CD14-positive monocyte (primary cell): ENCODE measurements at regions of chr18 and their contacts with region 1.

Region 1: GRCh38 chr18:57677262-57678211 is 55.9 kb upstream of the NARS1 start:
- DNase-seq: no peak
- H3K4me3 ChIP-seq: no peak overlapping the region
- H3K4me3 Mint-ChIP-seq: no peak overlapping the region
- H3K27ac ChIP-seq: no peak overlapping the region
- H3K27ac Mint-ChIP-seq: no peak overlapping the region
- H3K4me1 ChIP-seq: no peaks in the 10 kb centered on the region
- H3K4me1 Mint-ChIP-seq: no peaks in the 10 kb centered on the region
- H3K27me3 ChIP-seq: no peaks in the 10 kb centered on the region
- H3K27me3 Mint-ChIP-seq: peaks cover 0 to 1% (median 0%) of the 10 kb centered on the region in 3 donors
- CTCF ChIP-seq: no peak

Region 2: DNA sequence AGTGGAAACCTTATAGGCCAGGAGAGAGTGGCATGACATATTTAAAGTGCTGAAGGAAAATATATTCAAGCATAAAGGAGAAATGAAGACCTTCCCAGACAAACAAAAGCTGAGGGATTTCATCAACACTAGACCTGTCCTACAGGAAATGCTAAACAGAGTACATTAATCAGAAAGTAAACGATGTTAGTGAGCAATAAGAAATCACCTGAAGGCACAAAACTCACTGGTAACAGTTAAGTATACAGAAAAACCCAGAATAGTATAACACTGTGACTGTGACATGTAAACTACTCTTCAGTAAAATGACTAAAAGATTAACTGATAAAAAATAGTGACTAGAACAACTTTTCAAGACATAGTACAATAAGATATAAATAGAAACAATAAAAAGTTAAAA is 38.1 kb after region 1 on chr18:
- intact Hi-C with region 1: no loop called
- DNase-seq: no peak
- H3K4me3 ChIP-seq: no peak overlapping the region
- H3K4me3 Mint-ChIP-seq: no peak overlapping the region
- H3K27ac ChIP-seq: no peak overlapping the region
- H3K27ac Mint-ChIP-seq: no peak overlapping the region
- H3K4me1 ChIP-seq: no peaks in the 10 kb centered on the region
- H3K4me1 Mint-ChIP-seq: no peaks in the 10 kb centered on the region
- H3K27me3 ChIP-seq: no peaks in the 10 kb centered on the region
- H3K27me3 Mint-ChIP-seq: peaks cover 0 to 2% (median 1%) of the 10 kb centered on the region in 3 donors
- CTCF ChIP-seq: no peak

Region 3: DNA sequence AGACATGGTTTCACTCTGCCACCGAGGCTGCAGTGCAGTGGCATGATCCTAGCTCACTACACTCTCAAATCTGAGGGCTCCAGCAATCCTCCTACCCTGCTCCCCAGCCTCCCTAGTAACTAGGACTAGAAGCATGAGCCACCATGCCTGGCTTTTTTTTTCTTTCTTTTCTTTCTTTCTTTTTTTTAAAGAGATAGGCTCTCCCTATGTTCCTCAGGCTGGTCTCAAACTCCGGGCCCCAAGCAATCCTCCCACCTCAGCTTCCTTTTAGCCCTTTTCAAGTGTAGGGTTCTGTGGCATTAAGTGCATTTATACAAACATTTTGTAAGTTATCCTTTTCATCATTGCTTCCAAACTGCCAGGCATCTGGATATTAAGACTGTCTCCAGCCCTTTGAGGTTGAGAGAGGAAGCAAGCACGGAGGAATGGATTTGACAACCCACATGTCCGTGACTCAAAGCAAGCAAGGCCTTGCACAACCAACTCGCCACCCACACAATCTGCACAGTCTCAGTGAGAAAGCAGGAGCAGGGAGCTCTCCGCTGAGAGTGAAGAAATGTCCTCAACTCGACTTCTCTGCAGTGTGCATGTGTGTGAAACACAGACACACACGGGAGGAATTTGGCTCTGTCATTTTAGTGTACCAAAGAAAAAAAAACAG is 60.0 kb after region 1 on chr18:
- intact Hi-C with region 1: loop called in 1 of 2 experiments (anchors 10 kb)
- DNase-seq: peak; percentile 85 to 91 (median 88)
- H3K4me3 ChIP-seq: peak overlapping the region in 2 of 3 experiments; percentile 38 to 66
- H3K4me3 Mint-ChIP-seq: peak overlapping the region; percentile 6 to 89
- H3K27ac ChIP-seq: peak overlapping the region; percentile 3 to 76
- H3K27ac Mint-ChIP-seq: peak overlapping the region; percentile 81 to 93 (median 88)
- H3K4me1 ChIP-seq: peaks cover 15 to 19% of the 10 kb centered on the region in 2 donors
- H3K4me1 Mint-ChIP-seq: peaks cover 16% of the 10 kb centered on the region
- H3K27me3 ChIP-seq: no peaks in the 10 kb centered on the region
- H3K27me3 Mint-ChIP-seq: peaks cover 0 to 4% (median 0%) of the 10 kb centered on the region in 3 donors
- CTCF ChIP-seq: no peak